Activated B cell treated with CpG ODN at 0.5 μM for 24 hours (primary cell): ENCODE measurements at regions of chr2 and their contacts with region 1.

Region 1: GRCh38 chr2:207600231-207600630 is 25.0 kb downstream of the METTL21A start:
- DNase-seq: no peak
- ATAC-seq: no peak
- H3K4me3 Mint-ChIP-seq: no peak overlapping the region
- H3K27ac Mint-ChIP-seq: no peak overlapping the region
- H3K4me1 Mint-ChIP-seq: peaks cover 13% of the 10 kb centered on the region
- H3K27me3 Mint-ChIP-seq: no peaks in the 10 kb centered on the region
- CTCF ChIP-seq: no peak

Region 2: DNA sequence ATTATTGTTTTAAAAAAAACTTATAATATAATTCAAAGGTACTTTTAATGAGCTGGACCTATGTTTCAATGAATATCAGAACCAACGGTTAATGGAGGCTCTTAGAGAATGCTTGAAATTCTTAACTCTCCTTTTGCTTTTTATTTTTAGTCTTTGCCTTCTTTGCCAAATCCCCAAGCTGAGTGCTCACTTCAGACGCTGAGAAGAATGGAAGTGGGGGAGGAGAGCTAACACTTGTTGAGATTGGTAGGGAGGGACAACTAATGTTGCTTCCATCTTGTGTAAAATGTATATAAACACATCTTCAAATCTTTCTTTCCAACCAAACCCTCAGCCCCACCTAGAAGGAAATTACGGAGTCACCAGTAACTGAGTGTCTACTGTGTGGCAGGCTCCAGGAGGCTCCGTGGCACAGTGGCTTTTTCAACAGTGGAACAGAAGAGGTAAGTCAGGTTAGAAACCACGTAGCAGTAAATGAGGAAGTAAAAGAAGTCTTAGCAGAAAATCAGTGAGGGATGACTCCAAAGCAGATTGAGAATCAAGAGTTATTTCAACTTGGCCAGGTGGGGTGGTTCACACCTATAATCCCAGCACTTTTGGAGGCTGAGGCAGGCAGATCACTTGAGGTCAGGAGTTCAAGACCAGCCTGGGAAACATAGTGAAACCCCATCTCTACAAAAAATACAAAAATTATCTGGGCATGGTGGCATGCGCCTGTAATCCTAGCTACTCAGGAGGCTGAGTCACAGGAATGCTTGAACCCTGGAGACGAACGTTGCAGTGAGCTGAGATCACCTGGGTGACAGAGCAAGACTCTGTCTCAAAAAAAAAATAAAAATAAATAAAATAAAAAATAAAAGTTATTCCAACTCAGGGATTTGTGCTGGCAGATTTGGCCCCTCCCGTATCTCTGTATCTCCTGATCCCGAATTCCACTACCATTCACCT is 115.5 kb before region 1 on chr2:
- CTCF ChIA-PET with region 1: no interaction called
- POLR2A ChIA-PET with region 1: interaction called, 12 read pairs
- intact Hi-C with region 1: no loop called
- DNase-seq: no peak
- ATAC-seq: peak; percentile 93
- H3K4me3 Mint-ChIP-seq: peak overlapping the region; percentile 20
- H3K27ac Mint-ChIP-seq: peak overlapping the region; percentile 68
- H3K4me1 Mint-ChIP-seq: peaks cover 31% of the 10 kb centered on the region
- H3K27me3 Mint-ChIP-seq: no peaks in the 10 kb centered on the region
- CTCF ChIP-seq: no peak